ENCODE measurements at regions of chr1 and their contacts with region 1.

Region 1: GRCh38 chr1:205255941-205256780 is 28.4 kb downstream of the TMCC2 start:
- DNase-seq: peak; percentile 95
- H3K4me3 Mint-ChIP-seq: no peak overlapping the region
- H3K27ac Mint-ChIP-seq: no peak overlapping the region
- H3K4me1 Mint-ChIP-seq: no peaks in the 10 kb centered on the region
- H3K27me3 Mint-ChIP-seq: peaks cover 76% of the 10 kb centered on the region
- CTCF ChIP-seq: peak; percentile 99

Region 2: GRCh38 chr1:204989266-204990058 is 266.7 kb before region 1 on chr1:
- CTCF ChIA-PET with region 1: interaction called, 16 read pairs
- intact Hi-C with region 1: loop called (anchors 1 kb)
- DNase-seq: peak; percentile 79
- H3K4me3 Mint-ChIP-seq: no peak overlapping the region
- H3K27ac Mint-ChIP-seq: no peak overlapping the region
- H3K4me1 Mint-ChIP-seq: no peaks in the 10 kb centered on the region
- H3K27me3 Mint-ChIP-seq: peaks cover 100% of the 10 kb centered on the region
- CTCF ChIP-seq: peak; percentile 79

Region 3: DNA sequence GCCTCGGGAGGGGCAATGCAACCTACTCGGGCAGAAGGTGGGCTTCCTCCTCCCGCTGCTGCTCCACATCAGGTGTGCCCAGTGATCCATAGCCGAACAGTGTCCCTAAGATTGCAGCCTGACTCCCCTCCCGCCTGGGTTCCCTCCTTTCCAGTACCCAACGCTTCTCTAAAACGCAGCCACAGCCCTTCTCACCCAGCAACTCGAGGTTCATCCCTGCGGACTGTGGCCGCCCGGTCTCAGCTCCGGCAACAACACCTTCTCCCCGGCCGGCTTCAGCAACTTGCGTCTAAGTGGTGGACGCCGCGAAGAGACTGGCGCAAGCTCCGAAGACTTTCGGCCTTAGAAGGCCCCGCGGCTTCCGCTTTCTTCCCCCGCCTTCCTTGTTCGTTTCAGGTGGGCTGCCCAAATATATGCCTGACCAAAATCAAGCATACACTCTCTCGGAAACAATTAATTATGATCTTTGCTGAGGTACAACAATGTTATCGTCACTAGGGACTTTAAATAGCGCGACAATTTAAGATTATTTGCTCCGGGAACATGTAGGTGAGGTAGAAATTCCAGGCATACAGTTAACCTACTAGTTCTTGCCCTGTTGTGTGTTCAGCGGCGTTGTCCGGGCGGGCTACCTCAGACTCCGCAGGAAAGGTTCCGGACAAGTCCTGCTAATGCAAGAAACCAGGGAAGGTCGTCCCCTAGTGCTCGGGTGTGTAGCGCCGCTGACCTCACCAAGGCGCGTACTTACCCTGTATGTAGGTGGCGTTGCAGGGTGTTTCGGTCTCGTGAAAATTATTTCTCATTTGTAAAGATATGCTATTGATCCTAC is 134.3 kb before region 1 on chr1 and contains the start of gene RBBP5:
- CTCF ChIA-PET with region 1: interaction called, 10 read pairs
- intact Hi-C with region 1: loop called (anchors 5 kb)
- DNase-seq: peak; percentile 98
- H3K4me3 Mint-ChIP-seq: peak within 1 kb of the TSS; percentile 93
- H3K27ac Mint-ChIP-seq: peak within 1 kb of the TSS; percentile 94
- H3K4me1 Mint-ChIP-seq: peaks cover 34% of the 10 kb centered on the region
- H3K27me3 Mint-ChIP-seq: no peaks in the 10 kb centered on the region
- CTCF ChIP-seq: peak; percentile 69
- total RNA-seq, gene RBBP5: 21.9 and 22.0 TPM in 2 replicates

Region 4: GRCh38 chr1:205227584-205228006 is 28.6 kb before region 1 on chr1 and contains the start of gene TMCC2:
- CTCF ChIA-PET with region 1: interaction called, 39 read pairs
- intact Hi-C with region 1: loop called (anchors 2 kb)
- DNase-seq: peak; percentile 86
- H3K4me3 Mint-ChIP-seq: peak within 1 kb of the TSS; percentile 66
- H3K27ac Mint-ChIP-seq: peak within 1 kb of the TSS; percentile 2
- H3K4me1 Mint-ChIP-seq: peaks cover 28% of the 10 kb centered on the region
- H3K27me3 Mint-ChIP-seq: peaks cover 13% of the 10 kb centered on the region
- CTCF ChIP-seq: no peak
- total RNA-seq, gene TMCC2: 0.33 and 0.37 TPM in 2 replicates